ENCODE measurements at regions of chr1 and their contacts with region 1.

Region 1: DNA sequence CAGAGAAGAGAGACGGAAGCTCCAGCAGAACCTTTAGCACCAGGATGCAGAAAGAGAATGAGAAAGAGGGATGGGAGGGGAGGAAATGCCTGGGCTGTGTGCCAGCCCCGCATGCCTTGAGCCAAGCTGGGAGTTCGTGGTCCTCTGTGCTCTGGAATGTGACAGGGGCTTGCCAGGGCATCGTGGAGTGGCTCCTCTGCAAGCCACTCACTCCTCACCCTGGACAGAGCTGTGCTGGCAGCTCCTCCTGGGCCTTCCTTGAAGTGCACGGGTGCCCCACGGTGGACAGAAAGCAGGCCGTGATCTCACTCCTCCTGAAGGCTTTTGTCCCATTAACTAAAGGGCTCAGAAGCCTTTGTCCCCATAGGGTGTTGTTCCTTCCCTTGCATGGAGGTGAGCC is 34.8 kb upstream of the PRELP start:
- DNase-seq: peak; percentile 69 to 73
- ATAC-seq: peak; percentile 91 to 97 (median 93)
- H3K4me3 ChIP-seq: no peak overlapping the region
- H3K27ac ChIP-seq: peak overlapping the region in 4 of 10 donors; percentile 20 to 70 (median 45)
- H3K4me1 ChIP-seq: peaks cover 7 to 31% (median 9%) of the 10 kb centered on the region in 9 donors
- H3K27me3 ChIP-seq: no peaks in the 10 kb centered on the region
- CTCF ChIP-seq: peak; percentile 40 to 77 (median 67)

Region 2: DNA sequence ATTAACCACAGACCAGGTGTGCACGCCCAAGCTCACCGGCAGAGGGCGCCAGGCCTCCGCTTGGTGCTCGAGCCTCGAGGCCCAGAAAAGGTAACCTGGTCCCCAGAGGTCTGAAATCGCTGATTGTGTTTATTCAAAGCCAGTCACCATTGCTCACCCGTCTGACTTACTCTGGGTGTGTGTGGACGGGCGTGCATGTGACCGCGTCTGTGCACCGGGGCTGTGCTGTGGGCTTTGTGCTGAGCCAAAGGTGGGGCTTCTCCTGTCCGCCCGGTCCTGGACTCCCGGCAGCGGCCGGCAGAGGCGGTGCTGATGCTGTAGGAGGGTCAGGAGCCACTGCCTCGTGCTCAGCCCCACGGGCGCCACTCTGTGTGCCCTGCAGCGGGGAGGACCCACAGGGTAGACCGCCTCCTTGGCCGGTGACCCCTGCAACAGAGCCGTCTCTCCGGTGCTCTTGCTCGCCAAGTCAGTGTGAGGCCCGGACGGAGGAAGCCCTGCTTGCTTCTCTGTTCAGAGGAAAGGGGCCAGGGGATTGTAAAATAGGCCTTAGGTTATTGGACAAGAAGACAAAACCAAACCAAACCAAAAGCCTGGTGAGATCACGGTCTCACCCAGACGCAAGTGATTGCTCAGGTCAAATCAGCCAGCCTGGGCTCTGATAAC is 167.4 kb before region 1 on chr1:
- intact Hi-C with region 1: loop called in 3 of 10 experiments (anchors 5 to 10 kb)
- DNase-seq: peak; percentile 86 to 88
- ATAC-seq: peak; percentile 59 to 82 (median 74)
- H3K4me3 ChIP-seq: peak overlapping the region in 8 of 10 donors; percentile 17 to 47 (median 42)
- H3K27ac ChIP-seq: peak overlapping the region; percentile 26 to 94 (median 72)
- H3K4me1 ChIP-seq: peaks cover 18 to 77% (median 66%) of the 10 kb centered on the region in 9 donors
- H3K27me3 ChIP-seq: no peaks in the 10 kb centered on the region
- CTCF ChIP-seq: peak; percentile 95 to 99 (median 98)

Region 3: DNA sequence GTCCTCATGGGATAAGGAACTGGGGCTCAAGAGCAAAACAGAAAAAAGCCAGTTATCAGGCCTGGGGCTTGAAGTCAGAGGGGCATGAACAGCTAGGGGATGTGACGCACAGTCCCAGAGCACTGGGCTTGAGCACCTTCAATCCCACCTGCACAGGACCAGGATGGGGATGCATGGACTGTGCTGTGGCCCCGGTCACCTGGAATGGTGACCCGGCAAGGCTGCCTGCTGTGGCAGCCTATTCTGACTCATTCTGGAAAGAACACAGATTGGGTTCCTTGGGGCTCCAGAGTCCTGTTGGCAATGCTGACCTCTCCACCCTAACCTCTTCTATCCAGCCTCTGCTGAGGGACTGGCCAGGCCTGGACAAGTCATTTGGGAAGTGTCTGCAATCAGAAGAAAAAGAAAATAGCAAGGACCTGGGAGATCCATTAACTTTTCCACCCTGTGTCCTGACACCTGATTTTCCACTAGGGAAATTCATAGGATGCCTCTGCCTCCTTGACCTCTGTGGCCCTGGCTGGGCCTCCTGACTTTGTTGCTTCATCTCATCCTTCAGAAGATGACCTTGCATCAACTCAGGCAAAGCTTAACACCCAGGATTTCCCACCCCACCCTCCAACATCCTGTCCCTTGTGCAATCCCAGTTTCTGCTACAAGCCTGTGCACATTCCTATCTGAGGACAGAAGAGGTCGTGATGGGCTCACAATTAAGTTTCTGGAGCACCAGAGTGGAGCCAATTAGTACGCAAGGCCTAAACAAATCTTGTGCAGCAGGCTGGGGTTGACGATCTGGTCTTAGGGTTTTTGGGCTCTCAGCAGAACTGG is 71.9 kb before region 1 on chr1:
- intact Hi-C with region 1: loop called in 3 of 10 experiments (anchors 2 to 5 kb)
- DNase-seq: peak; percentile 56 to 76
- ATAC-seq: peak; percentile 85 to 94 (median 92)
- H3K4me3 ChIP-seq: no peak overlapping the region
- H3K27ac ChIP-seq: peak overlapping the region in 9 of 10 donors; percentile 17 to 79 (median 56)
- H3K4me1 ChIP-seq: peaks cover 1 to 33% (median 26%) of the 10 kb centered on the region in 9 donors
- H3K27me3 ChIP-seq: peaks cover 0 to 7% (median 0%) of the 10 kb centered on the region in 7 donors
- CTCF ChIP-seq: peak in 8 of 9 donors; percentile 25 to 73 (median 56)

Region 4: GRCh38 chr1:203408486-203409427 is 32.0 kb before region 1 on chr1:
- intact Hi-C with region 1: loop called in 3 of 10 experiments (anchors 5 kb)
- DNase-seq: peak; percentile 73 to 74
- ATAC-seq: peak; percentile 74 to 95 (median 90)
- H3K4me3 ChIP-seq: no peak overlapping the region
- H3K27ac ChIP-seq: peak overlapping the region in 8 of 10 donors; percentile 39 to 83 (median 65)
- H3K4me1 ChIP-seq: peaks cover 8 to 53% (median 43%) of the 10 kb centered on the region in 9 donors
- H3K27me3 ChIP-seq: no peaks in the 10 kb centered on the region
- CTCF ChIP-seq: no peak

Region 5: DNA sequence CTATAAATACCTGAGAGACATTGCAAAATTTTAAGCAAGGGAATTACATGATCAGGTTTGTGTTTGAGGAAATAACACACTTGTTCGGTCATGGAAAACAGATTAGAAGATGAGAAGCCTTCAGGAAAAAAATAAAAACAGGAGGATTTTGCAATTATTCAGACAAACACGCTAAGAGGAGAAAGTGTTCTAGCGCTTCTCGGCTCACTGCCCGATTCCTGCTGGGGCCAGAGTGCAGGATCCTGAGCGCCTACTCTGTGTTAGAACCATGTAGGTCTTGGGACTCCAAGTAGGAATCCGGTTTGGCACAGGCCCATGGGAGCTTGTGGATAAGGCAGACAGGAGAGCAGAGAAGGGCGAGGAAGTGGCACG is 26.8 kb after region 1 on chr1:
- intact Hi-C with region 1: no loop called
- DNase-seq: peak; percentile 56 to 76
- ATAC-seq: peak in 7 of 8 donors; percentile 18 to 66 (median 39)
- H3K4me3 ChIP-seq: no peak overlapping the region
- H3K27ac ChIP-seq: peak overlapping the region; percentile 31 to 77 (median 62)
- H3K4me1 ChIP-seq: peaks cover 4 to 60% (median 36%) of the 10 kb centered on the region in 9 donors
- H3K27me3 ChIP-seq: no peaks in the 10 kb centered on the region
- CTCF ChIP-seq: no peak

Region 6: DNA sequence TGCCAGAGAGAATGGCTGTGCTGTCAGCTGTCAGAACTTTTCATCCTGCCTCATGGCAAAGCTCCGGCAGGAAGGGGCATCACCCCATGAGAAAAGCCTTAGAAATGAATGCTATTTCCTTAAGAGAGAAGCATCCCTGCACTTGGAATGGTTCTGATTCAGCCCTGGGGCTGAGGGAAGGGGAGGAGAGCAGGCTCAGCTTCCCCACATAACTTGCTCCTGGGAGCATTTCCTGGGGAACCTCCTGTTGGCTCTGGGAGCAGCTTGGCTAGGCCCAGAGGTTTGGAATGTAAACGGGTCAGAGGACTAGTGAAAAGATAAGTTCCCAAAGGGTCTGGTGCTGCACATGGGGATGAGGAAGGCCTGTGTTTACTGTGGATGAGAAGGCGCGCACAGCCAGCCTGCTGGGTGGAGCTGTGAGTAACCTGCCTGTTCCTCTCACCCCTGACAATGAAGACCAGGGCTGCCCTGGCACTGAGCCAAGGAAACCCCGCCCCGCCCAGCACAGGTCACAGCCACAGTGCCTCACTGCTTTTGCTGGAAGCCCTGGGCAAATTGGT is 39.8 kb after region 1 on chr1:
- intact Hi-C with region 1: loop called in 3 of 10 experiments (anchors 5 kb)
- DNase-seq: peak; percentile 29 to 69
- ATAC-seq: peak; percentile 26 to 72 (median 49)
- H3K4me3 ChIP-seq: peak overlapping the region in 7 of 10 donors; percentile 10 to 60 (median 22)
- H3K27ac ChIP-seq: peak overlapping the region in 9 of 10 donors; percentile 55 to 74 (median 64)
- H3K4me1 ChIP-seq: peaks cover 7 to 51% (median 22%) of the 10 kb centered on the region in 9 donors
- H3K27me3 ChIP-seq: no peaks in the 10 kb centered on the region
- CTCF ChIP-seq: no peak

Region 7: DNA sequence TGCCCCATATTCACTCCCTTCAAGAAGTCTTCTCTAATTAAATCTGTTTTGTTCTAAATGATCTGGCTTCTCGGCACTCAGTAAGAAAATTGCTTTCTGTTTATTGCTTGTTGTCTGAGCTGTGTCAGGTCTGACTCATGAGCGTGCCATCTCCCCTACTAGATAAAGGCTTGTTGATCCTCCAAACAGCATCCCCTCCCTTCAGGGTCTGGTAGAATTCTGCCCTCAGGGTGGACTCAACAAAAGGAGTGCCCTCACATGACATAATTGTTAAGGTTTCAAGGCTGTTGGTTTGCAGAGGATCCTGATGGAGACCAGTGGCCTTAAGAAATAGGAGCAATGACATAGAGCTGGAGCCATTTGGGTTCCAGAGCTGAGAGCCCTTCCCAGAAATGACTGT is 149.8 kb after region 1 on chr1:
- intact Hi-C with region 1: no loop called
- DNase-seq: no peak
- ATAC-seq: no peak
- H3K4me3 ChIP-seq: no peak overlapping the region
- H3K27ac ChIP-seq: no peak overlapping the region
- H3K4me1 ChIP-seq: peaks cover 0 to 24% (median 18%) of the 10 kb centered on the region in 9 donors
- H3K27me3 ChIP-seq: no peaks in the 10 kb centered on the region
- CTCF ChIP-seq: no peak

Measured in heart right ventricle (tissue), 16 donors.